Caco-2 (cell line): ENCODE measurements at regions of chr12 and their contacts with region 1.

Region 1: GRCh38 chr12:46825591-46826414 is at the start of gene SLC38A4:
- DNase-seq: peak; percentile 67 to 84
- H3K4me3 ChIP-seq: peak within 1 kb of the TSS; percentile 65
- H3K4me3 Mint-ChIP-seq: peak within 1 kb of the TSS; percentile 77
- H3K27ac Mint-ChIP-seq: peak within 1 kb of the TSS; percentile 11
- H3K4me1 ChIP-seq: no peaks in the 10 kb centered on the region; the same call in 1 of the 2 replicates
- H3K4me1 Mint-ChIP-seq: peaks cover 21% of the 10 kb centered on the region
- H3K27me3 ChIP-seq: no peaks in the 10 kb centered on the region
- H3K27me3 Mint-ChIP-seq: no peaks in the 10 kb centered on the region
- CTCF ChIP-seq: peak in 1 of 2 experiments; percentile 56
- total RNA-seq, gene SLC38A4: 16.0 and 20.1 TPM in 2 replicates

Region 2: DNA sequence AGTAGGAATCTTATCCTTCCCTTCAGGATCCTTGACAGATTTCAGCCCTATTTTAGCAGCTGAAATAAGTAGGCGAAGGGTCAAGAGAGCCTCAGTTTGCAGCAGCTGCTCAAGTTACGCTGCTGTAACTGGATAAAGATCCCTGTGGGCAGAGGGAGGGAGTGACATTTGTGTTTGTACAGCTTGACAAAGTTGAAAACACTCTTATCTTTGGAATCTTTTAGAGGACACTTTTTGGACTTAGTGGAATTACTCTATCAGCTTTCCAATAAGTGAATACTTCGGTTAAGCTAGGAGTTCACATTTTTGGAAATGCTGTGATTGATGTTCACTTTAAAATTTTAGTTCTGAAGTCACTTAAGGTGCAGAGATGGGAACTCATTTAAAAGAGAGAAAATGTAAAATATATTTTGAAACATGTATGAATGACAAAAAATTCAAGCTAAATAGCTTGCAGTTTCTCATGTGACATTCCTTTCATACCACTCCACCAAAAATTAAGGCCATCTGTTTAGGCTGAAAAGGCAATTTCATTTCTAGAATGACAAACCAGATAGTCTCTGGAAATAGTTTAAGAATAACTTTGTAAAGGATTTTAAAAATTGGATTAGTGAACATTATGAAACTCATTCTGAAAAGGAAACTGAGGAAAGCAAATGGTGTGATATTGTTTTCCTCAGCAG is 55.2 kb before region 1 on chr12:
- CTCF ChIA-PET with region 1: no interaction called
- POLR2A ChIA-PET with region 1: no interaction called
- intact Hi-C with region 1: loop called (anchors 2 kb)
- DNase-seq: peak; percentile 78 to 83
- H3K4me3 ChIP-seq: no peak overlapping the region
- H3K4me3 Mint-ChIP-seq: peak overlapping the region; percentile 53
- H3K27ac Mint-ChIP-seq: peak overlapping the region; percentile 79
- H3K4me1 ChIP-seq: peaks cover 48% of the 10 kb centered on the region
- H3K4me1 Mint-ChIP-seq: peaks cover 52% of the 10 kb centered on the region
- H3K27me3 ChIP-seq: no peaks in the 10 kb centered on the region
- H3K27me3 Mint-ChIP-seq: no peaks in the 10 kb centered on the region
- CTCF ChIP-seq: no peak

Region 3: GRCh38 chr12:46811185-46811584 is 14.6 kb before region 1 on chr12:
- CTCF ChIA-PET with region 1: no interaction called
- POLR2A ChIA-PET with region 1: no interaction called
- intact Hi-C with region 1: no loop called
- DNase-seq: no peak
- H3K4me3 ChIP-seq: no peak overlapping the region
- H3K4me3 Mint-ChIP-seq: no peak overlapping the region
- H3K27ac Mint-ChIP-seq: no peak overlapping the region
- H3K4me1 ChIP-seq: peaks cover 3% of the 10 kb centered on the region; the same call in 1 of the 2 replicates
- H3K4me1 Mint-ChIP-seq: no peaks in the 10 kb centered on the region
- H3K27me3 ChIP-seq: no peaks in the 10 kb centered on the region
- H3K27me3 Mint-ChIP-seq: no peaks in the 10 kb centered on the region
- CTCF ChIP-seq: no peak